ENCODE measurements at regions of chr5 and their contacts with region 1.

Region 1: DNA sequence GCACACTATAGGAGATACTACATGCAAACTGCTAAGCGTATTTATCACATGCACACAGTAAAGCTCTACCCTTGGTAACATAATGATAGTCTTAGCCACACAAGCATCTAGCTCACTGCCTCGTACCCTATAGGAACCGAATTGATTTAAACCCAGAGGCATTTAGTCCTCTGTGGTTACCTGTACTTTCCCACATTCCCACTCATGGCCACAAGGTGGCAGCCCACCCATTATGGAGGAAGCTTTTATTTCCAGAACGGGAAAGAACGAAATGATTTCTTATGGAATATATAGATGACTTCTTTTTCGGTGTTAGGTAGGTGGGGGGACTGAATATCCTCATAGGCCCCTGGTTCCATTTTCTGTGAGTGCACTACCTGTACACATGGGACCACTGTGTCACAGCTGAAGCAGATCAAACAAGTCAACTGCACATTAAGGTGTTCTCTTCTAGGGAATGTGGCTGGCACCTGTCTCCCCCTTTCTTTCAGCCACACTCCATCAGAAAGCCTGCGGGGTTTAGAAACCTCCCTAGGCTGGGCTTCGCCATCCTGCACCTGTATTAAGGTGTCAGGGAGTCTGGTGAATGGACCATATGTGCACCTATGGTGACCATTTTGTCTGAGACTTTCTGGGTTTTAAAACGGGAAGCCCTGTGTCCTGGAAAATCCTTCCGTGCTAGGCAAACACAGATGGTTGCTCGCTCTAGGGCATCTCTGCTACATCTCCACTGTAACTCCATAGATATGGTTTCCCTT is 313.2 kb downstream of the SLIT3 start:
- DNase-seq: no peak
- H3K4me3 ChIP-seq: no peak overlapping the region
- H3K27me3 ChIP-seq: no peaks in the 10 kb centered on the region
- CTCF ChIP-seq: peak; percentile 81

Region 2: GRCh38 chr5:168947212-168947868 is 40.4 kb before region 1 on chr5:
- CTCF ChIA-PET with region 1: interaction called, 11 read pairs
- POLR2A ChIA-PET with region 1: no interaction called
- DNase-seq: no peak
- H3K4me3 ChIP-seq: no peak overlapping the region
- H3K27me3 ChIP-seq: no peaks in the 10 kb centered on the region
- CTCF ChIP-seq: peak; percentile 91

Region 3: GRCh38 chr5:169302491-169303118 is 314.9 kb after region 1 on chr5:
- CTCF ChIA-PET with region 1: interaction called, 34 read pairs
- POLR2A ChIA-PET with region 1: no interaction called
- DNase-seq: peak; percentile 45
- H3K4me3 ChIP-seq: no peak overlapping the region
- H3K27me3 ChIP-seq: peaks cover 6% of the 10 kb centered on the region
- CTCF ChIP-seq: peak; percentile 92

Region 4: DNA sequence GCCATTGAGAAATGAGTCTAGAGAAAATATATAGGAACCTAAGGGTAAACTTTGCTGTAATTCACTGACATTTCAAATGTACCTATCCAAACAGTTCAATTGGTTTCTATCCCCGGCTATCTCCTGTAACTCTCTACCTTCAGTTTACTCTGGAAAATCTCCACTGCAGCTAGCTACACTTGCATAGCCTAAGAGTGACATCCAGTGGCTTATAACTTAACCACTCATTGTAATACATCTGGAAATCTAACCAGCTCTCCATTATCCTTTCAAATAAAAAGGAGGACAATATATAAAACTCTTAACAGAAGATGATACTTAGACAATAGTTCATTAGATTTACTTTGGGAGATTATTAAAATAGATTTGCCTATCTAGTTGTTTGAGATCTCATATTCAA is 560.6 kb after region 1 on chr5:
- CTCF ChIA-PET with region 1: interaction called, 28 read pairs
- POLR2A ChIA-PET with region 1: no interaction called
- DNase-seq: no peak
- H3K4me3 ChIP-seq: no peak overlapping the region
- H3K27me3 ChIP-seq: no peaks in the 10 kb centered on the region
- CTCF ChIP-seq: peak; percentile 48

Region 5: DNA sequence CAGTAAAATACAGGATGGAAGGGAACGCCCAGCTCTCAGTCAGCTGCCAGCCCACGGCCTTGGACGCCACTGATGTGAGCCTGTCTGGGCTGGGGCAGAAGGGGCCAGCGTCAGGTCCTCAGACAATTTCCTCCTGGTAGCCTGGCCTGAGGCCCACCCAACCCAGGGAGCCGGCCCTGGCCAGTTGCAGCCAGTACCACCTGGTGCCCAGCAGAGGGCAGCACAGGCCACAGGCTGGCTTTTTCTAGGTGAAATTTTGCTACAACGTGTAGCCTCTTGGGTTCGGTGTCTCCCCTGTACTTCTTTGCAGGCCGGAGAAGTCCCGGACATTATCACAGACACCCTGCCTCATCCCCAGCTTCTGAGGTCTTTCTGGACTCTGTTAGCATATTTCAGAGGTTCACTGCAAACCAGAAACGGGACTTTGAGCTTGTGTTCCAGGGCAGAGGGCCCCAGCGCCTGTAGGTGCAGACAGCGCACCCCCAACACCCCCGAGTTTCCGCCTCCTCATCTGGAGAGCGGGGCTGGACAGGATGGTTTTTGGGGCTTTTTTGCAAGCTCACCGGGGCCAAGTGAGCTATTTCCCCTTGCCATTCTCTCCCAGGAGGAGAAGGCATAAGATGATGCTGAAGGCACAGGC is 1447.4 kb after region 1 on chr5:
- CTCF ChIA-PET with region 1: no interaction called
- POLR2A ChIA-PET with region 1: no interaction called
- DNase-seq: no peak
- H3K4me3 ChIP-seq: no peak overlapping the region
- H3K27me3 ChIP-seq: peaks cover 6% of the 10 kb centered on the region; the same call in 1 of the 2 replicates
- CTCF ChIP-seq: peak; percentile 98